ENCODE measurements at regions of chr11 and their contacts with region 1.

Region 1: GRCh38 chr11:94623120-94623735 is 56.1 kb downstream of the PIWIL4 start:
- DNase-seq: peak; percentile 40
- ATAC-seq: peak; percentile 96

Region 2: DNA sequence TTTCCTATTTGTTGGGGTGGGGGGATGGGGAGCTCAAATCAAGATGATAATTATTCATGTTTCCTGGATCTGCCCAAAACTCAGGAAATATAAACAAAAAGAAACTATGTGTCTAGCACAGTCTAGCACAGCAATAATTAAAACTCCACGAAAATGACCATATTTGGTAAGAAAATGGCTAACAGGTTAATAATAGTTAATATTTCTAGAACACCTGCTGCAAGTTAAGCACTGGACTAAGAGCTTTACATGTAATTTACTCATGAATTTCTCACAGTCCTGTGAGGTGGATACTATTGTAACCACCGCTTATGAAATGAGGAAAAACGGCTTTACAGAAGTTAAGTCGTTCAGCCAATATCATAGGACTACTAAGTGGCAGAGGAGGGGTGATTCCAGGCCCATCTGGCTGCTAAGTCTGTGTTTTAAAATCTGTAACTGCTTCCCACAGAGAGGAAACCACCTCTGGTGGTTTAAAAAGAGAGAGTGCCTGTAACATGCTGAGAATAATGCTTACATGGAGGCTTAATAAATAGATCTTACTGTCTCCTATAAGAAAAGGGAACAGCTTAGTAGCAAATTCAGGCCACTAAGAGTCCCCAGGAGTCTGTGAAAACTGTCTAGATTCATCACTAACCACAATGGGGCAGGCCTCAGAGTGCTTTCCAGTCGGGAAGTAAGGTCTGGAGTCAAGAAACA is 134.0 kb after region 1 on chr11:
- intact Hi-C with region 1: loop called in 1 of 2 experiments (anchors 10 kb)
- DNase-seq: no peak
- ATAC-seq: no peak

Region 3: DNA sequence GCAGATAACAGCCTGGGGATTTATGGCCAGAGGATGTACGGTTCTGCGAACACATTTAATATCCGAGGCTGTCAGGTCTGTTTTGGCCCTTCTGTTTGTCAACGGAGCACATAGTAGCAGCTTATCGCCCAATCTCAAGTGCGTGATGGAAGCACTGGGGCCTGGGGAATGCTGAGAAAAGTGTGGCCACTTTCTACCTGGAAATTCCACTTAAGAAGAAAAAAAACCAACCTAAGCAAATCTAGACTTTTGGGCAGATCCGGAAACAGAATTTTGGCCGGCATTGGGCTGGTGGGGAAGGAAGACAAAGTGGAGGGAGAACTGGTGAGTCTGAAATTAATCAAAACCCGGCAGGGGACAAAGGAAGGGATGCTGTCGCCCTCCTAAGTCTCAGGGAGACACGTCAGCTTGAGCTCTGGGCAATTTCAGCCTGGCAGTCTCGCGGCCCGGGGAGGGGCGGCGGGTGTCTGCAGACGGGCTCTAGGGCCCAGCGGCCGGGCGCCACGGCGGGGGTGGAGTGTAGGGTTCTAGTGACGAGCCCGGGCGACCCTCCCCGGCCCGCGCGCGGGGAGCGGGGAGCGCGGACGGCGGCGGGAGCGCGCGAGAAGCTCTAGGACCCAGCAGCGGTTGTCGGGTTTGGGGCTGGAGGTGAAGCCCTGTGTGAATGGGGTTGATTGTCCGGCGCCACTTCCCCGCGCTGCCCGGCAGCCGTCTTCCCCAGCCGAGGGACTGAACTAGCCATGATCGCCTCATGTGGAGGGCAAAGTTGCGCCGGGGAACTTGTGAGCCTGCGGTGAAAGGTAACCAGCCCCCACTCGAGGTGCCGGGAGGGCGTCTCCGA is 144.8 kb after region 1 on chr11 and contains the start of gene AMOTL1:
- intact Hi-C with region 1: loop called in 1 of 2 experiments (anchors 5 kb)
- DNase-seq: peak; percentile 95
- ATAC-seq: peak; percentile 91 to 95
- total RNA-seq, gene AMOTL1: 60.6 to 106 TPM

Region 4: DNA sequence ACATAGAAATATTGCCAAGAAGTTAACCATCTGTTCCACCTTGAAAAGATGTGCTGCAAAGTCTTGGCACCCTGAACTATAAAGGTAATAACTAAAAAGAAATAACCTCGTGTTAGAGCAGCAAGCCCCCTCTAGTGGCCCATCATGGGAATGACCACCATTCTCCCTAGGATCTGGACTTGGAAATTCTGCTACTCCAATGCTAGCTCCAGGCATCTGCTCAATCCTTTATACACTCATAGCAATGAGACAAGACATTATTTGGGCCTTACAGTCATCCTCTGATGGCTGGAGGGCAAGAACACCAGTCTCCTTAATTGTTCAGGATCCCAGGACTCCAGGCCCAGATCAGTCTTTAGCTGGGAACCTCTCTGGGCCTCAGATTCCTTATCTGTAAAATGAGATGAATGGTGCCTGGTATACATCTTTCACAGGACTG is 274.1 kb after region 1 on chr11:
- intact Hi-C with region 1: loop called (anchors 2 to 5 kb)
- DNase-seq: peak; percentile 43
- ATAC-seq: peak in 1 of 2 donors; percentile 33

Region 5: GRCh38 chr11:94973099-94973968 is 350.1 kb after region 1 on chr11 and contains the starts of genes CWC15 and KDM4D:
- intact Hi-C with region 1: loop called in 1 of 2 experiments (anchors 1 kb)
- DNase-seq: peak; percentile 96
- ATAC-seq: peak; percentile 100
- total RNA-seq, gene CWC15: 60.8 to 65.5 TPM
- total RNA-seq, gene KDM4D: 0.80 to 0.89 TPM

Measured in left cardiac atrium (tissue), 4 donors.